BJ (cell line): ENCODE measurements at regions of chr6 and their contacts with region 1.

Region 1: GRCh38 chr6:151317103-151317994 is 74.0 kb downstream of the ZBTB2 start:
- DNase-seq: no peak
- H3K4me3 ChIP-seq: no peak overlapping the region
- H3K27me3 ChIP-seq: no peaks in the 10 kb centered on the region
- CTCF ChIP-seq: no peak

Region 2: DNA sequence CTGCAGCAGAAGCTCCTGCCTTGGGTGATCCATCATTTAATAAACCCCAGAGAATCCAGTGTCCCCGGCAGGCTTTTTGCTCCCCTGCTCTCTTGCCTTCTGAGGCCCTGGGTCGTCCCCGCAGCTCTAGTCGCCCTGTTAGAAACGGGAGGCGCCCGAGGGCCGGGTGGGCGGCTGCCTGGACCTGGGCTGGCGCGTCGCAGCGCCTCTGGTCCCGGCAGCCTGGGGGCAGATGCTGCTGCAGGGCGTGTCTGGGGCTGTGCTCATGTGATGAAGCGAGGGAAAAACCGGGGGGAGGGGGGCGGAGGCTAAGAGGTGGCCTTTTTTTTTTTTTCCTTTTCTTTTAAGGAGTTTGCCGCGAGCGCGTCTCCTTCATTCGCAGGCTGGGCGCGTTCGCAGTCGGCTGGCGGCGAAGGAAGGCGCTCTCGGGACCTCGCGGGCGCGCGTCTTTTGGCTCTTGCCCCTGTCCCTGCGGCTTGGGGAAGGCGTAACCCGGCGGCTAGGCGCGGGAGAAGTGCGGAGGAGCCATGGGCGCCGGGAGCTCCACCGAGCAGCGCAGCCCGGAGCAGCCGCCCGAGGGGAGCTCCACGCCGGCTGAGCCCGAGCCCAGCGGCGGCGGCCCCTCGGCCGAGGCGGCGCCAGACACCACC is 77.2 kb before region 1 on chr6:
- CTCF ChIA-PET with region 1: no interaction called
- POLR2A ChIA-PET with region 1: interaction called, 10 read pairs
- DNase-seq: no peak
- H3K4me3 ChIP-seq: peak overlapping the region; percentile 88
- H3K27me3 ChIP-seq: no peaks in the 10 kb centered on the region; the same call in 1 of the 2 replicates
- CTCF ChIP-seq: no peak

Region 3: DNA sequence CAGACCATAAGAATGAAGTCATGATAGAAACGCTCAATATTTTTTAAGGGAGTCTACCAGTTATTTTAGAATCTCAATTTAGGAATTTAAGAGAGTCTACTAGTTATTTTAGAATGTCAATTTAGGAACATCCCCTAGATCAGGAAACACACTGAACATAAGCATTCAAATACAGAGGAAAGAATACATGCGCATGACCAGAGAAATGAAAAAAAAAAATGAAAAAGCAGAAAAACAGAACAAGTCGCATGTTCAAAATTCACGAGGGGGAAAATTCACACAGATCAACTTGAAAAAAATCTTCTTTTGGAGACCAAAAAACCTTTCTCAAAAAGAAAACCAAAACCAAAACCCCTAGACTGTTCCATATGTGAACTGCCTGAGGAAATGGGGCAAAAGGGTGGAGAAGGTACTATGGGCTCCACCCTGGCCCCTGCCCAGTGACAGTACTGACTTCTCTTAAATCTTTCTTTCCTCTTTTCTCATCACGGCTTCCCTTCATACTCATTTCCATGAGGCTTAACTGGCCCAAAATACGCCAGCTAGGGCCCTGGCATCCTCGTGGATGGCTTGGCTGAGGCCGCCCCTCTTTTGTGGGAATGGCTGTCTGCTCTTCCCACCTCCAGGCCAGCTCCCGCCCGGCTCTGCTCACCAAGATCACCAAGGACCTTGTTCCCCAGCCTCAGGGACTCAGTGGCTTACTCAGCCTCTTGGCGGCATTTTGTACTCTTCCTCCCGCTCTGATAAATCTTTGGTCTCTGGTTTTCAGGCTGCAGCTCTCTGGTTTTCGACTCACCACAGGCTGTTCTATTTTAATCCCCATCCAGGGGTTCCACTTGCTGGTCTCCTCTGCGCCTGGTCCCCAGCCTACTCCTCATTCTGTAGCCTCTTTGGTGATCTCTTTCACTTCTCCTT is 62.8 kb after region 1 on chr6:
- CTCF ChIA-PET with region 1: no interaction called
- POLR2A ChIA-PET with region 1: no interaction called
- DNase-seq: no peak
- H3K4me3 ChIP-seq: no peak overlapping the region
- H3K27me3 ChIP-seq: no peaks in the 10 kb centered on the region
- CTCF ChIP-seq: no peak